Activated B cell treated with CpG ODN at 0.5 μM for 24 hours (primary cell): ENCODE measurements at regions of chr12 and their contacts with region 1.

Region 1: GRCh38 chr12:121773011-121773777 is 20.3 kb downstream of the RHOF start:
- DNase-seq: peak; percentile 72
- ATAC-seq: peak; percentile 91
- H3K4me3 Mint-ChIP-seq: no peak overlapping the region
- H3K27ac Mint-ChIP-seq: peak overlapping the region; percentile 66
- H3K4me1 Mint-ChIP-seq: peaks cover 17% of the 10 kb centered on the region
- H3K27me3 Mint-ChIP-seq: no peaks in the 10 kb centered on the region
- CTCF ChIP-seq: no peak

Region 2: DNA sequence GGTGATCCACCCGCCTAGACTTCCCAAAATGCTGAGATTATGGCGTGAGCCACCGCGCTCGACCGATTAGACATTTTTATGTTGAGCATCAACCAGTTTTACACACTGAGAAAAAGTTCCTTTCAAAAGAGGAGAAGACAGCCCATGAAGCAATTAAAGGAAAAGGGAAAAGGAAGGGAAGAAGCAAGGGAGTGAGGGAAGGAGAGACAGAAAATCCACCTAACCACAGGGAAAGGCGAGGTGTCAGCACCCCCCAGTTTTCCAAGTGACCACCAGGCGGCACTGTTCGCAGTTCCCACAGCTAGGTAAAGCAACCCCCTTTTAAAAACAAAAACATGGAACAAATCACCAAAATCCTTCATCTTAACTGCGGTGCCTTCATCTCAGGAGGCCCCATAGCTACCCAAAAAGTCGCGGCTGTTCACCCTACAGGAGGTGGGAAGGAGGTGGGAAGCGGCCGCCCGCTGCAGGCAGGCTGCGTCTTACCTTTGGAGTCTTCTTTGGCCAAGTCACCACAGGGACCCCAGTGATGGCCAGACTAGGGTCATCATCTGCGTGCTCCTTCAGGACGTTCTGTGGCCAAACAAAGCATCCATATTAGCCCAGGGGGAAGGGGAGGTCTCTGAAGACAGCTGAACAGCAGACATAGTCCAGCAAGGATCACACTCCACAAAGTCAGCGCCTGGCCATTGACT is 279.0 kb before region 1 on chr12:
- CTCF ChIA-PET with region 1: no interaction called
- POLR2A ChIA-PET with region 1: interaction called, 3 read pairs
- intact Hi-C with region 1: loop called (anchors 5 kb)
- DNase-seq: peak; percentile 37
- ATAC-seq: no peak
- H3K4me3 Mint-ChIP-seq: no peak overlapping the region
- H3K27ac Mint-ChIP-seq: no peak overlapping the region
- H3K4me1 Mint-ChIP-seq: peaks cover 40% of the 10 kb centered on the region
- H3K27me3 Mint-ChIP-seq: no peaks in the 10 kb centered on the region
- CTCF ChIP-seq: no peak

Region 3: DNA sequence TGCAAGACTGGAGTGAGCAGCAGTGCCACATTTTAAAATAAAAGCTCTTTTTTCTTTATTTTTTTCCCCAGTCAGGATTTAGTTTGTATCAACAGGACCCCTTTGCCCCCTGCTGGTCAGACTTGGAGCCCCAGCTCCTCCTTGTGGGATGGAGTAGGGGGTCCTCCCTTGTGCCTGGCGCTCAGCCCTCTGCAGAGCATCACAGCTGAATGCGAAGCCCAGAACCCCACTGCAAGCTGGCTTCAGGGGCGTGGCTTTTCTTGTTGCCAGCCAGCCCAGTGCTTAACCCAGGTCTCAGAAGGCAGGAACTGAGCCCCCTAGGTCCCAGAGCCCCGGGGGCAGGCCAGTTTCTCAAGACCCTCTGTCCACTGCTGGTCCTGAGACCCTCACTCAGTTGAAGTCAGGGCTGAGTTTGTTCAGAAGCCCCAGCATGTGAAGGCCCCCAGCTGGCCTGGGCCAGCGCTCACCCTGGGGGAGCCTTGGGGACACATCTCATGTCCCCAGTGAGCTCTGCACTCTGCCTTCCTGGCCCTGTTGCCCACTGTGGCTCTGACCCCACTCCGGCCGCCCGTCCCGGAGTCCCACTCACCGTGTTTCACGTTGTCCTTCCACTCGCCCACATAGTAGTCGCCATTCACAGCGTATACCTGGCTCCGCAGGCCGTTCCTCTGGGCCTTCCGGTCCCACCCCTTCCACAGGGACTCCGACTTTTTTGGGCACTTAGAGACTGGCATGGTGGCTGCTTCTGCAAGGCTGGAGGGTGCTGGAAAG is 104.3 kb before region 1 on chr12:
- CTCF ChIA-PET with region 1: no interaction called
- POLR2A ChIA-PET with region 1: no interaction called
- intact Hi-C with region 1: no loop called
- DNase-seq: peak; percentile 38
- ATAC-seq: no peak
- H3K4me3 Mint-ChIP-seq: no peak overlapping the region
- H3K27ac Mint-ChIP-seq: peak overlapping the region; percentile 14
- H3K4me1 Mint-ChIP-seq: peaks cover 49% of the 10 kb centered on the region
- H3K27me3 Mint-ChIP-seq: no peaks in the 10 kb centered on the region
- CTCF ChIP-seq: no peak

Region 4: GRCh38 chr12:121697098-121697698 is 76.0 kb before region 1 on chr12:
- CTCF ChIA-PET with region 1: interaction called, 8 read pairs
- POLR2A ChIA-PET with region 1: interaction called, 3 read pairs
- intact Hi-C with region 1: loop called (anchors 1 kb)
- DNase-seq: no peak
- ATAC-seq: peak; percentile 31
- H3K4me3 Mint-ChIP-seq: no peak overlapping the region
- H3K27ac Mint-ChIP-seq: no peak overlapping the region
- H3K4me1 Mint-ChIP-seq: no peaks in the 10 kb centered on the region
- H3K27me3 Mint-ChIP-seq: peaks cover 2% of the 10 kb centered on the region
- CTCF ChIP-seq: no peak

Region 5: DNA sequence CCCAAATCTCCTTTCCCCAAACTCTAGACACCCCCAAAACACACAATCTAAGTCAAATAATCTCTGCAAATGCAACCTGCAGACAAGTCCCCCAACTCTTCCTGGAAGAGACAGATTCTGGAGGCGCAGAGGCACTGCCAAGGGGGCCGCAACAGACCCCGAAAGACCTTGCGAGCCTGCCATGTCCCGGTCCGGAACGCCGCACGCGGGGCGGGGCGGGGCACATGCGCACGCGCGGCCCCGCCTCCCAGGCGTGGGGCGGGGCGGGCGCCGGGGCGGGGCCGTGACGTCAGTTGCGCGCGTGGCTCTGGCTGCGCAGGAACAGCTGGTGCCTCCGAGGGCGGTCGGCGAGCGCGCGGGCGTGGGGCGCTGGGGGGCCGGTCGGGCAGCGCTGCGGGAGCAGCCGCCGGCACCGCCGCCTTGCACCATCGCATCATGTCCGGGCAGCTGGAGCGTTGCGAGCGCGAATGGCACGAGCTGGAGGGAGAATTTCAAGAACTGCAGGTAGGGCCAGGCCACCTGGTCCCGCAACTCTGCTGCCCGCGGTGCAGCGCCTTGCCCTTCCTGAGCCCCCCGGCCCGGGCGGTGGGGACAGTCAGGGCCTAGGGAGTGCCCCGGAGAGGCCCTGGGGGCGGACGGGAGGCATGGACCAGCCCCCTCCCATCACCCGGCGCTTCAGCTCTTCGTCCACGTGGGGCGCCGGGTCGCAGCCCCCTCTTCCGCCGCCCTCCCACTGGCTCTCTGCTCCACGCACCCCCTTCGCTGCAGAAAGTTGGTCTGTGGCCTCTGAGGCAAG is 60.5 kb before region 1 on chr12 and contains the start of gene TMEM120B:
- CTCF ChIA-PET with region 1: no interaction called
- POLR2A ChIA-PET with region 1: no interaction called
- intact Hi-C with region 1: loop called (anchors 1 kb)
- DNase-seq: peak; percentile 86
- ATAC-seq: peak; percentile 94
- H3K4me3 Mint-ChIP-seq: peak within 1 kb of the TSS; percentile 97
- H3K27ac Mint-ChIP-seq: peak within 1 kb of the TSS; percentile 90
- H3K4me1 Mint-ChIP-seq: peaks cover 32% of the 10 kb centered on the region
- H3K27me3 Mint-ChIP-seq: no peaks in the 10 kb centered on the region
- CTCF ChIP-seq: no peak
- total RNA-seq, gene TMEM120B: 7.3 and 8.3 TPM in 2 replicates

Region 6: GRCh38 chr12:121811434-121812319 is 38.5 kb after region 1 on chr12:
- CTCF ChIA-PET with region 1: interaction called, 21 read pairs
- POLR2A ChIA-PET with region 1: interaction called, 1,155 read pairs
- intact Hi-C with region 1: loop called (anchors 1 kb)
- DNase-seq: peak; percentile 81
- ATAC-seq: peak; percentile 83
- H3K4me3 Mint-ChIP-seq: peak overlapping the region; percentile 74
- H3K27ac Mint-ChIP-seq: peak overlapping the region; percentile 18
- H3K4me1 Mint-ChIP-seq: peaks cover 54% of the 10 kb centered on the region
- H3K27me3 Mint-ChIP-seq: no peaks in the 10 kb centered on the region
- CTCF ChIP-seq: peak; percentile 100